ENCODE measurements at regions of chr4 and their contacts with region 1.

Region 1: GRCh38 chr4:69718396-69719253 is 41.8 kb downstream of the SULT1B1 start:
- DNase-seq: no peak
- ATAC-seq: no peak
- H3K4me3 ChIP-seq: no peak overlapping the region
- H3K4me3 Mint-ChIP-seq: no peak overlapping the region
- H3K27ac ChIP-seq: no peak overlapping the region
- H3K27ac Mint-ChIP-seq: no peak overlapping the region
- H3K4me1 ChIP-seq: no peaks in the 10 kb centered on the region
- H3K4me1 Mint-ChIP-seq: peaks cover 6% of the 10 kb centered on the region
- H3K27me3 ChIP-seq: no peaks in the 10 kb centered on the region
- H3K27me3 Mint-ChIP-seq: no peaks in the 10 kb centered on the region
- CTCF ChIP-seq: no peak

Region 2: GRCh38 chr4:68535974-68536373 is 1182.7 kb before region 1 on chr4:
- CTCF ChIA-PET with region 1: no interaction called
- POLR2A ChIA-PET with region 1: no interaction called
- intact Hi-C with region 1: no loop called
- DNase-seq: no peak
- ATAC-seq: no peak
- H3K4me3 ChIP-seq: no peak overlapping the region
- H3K4me3 Mint-ChIP-seq: no peak overlapping the region
- H3K27ac ChIP-seq: no peak overlapping the region
- H3K27ac Mint-ChIP-seq: no peak overlapping the region
- H3K4me1 ChIP-seq: no peaks in the 10 kb centered on the region
- H3K4me1 Mint-ChIP-seq: no peaks in the 10 kb centered on the region
- H3K27me3 ChIP-seq: no peaks in the 10 kb centered on the region
- H3K27me3 Mint-ChIP-seq: peaks cover 4% of the 10 kb centered on the region
- CTCF ChIP-seq: no peak

Region 3: GRCh38 chr4:69707807-69708206 is 10.8 kb before region 1 on chr4:
- CTCF ChIA-PET with region 1: no interaction called
- POLR2A ChIA-PET with region 1: no interaction called
- intact Hi-C with region 1: no loop called
- DNase-seq: no peak
- ATAC-seq: no peak
- H3K4me3 ChIP-seq: no peak overlapping the region
- H3K4me3 Mint-ChIP-seq: no peak overlapping the region
- H3K27ac ChIP-seq: no peak overlapping the region
- H3K27ac Mint-ChIP-seq: no peak overlapping the region
- H3K4me1 ChIP-seq: no peaks in the 10 kb centered on the region
- H3K4me1 Mint-ChIP-seq: peaks cover 2% of the 10 kb centered on the region
- H3K27me3 ChIP-seq: no peaks in the 10 kb centered on the region
- H3K27me3 Mint-ChIP-seq: no peaks in the 10 kb centered on the region
- CTCF ChIP-seq: no peak

Region 4: DNA sequence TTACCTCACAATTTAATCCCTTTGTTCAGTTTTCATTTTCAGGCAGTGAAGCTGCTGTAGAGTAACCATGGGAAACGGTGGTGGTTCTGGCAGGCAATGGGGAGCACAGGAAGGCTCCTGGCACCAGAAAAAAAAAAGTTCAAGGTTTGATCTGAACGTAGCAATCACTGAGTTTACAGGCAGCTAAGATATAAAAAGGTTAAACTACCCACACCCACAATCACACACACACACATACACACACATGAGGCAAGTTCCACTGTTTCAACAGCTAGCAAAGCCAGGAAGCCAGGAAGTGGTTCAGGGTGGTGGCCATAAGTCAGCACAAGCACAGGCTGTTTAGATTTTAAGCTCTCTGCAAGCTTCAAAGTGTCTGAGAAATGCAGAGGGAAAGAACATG is 41.8 kb after region 1 on chr4 and contains the start of gene SULT1B1:
- CTCF ChIA-PET with region 1: no interaction called
- POLR2A ChIA-PET with region 1: no interaction called
- intact Hi-C with region 1: loop called in 1 of 2 experiments (anchors 5 kb)
- DNase-seq: peak in 8 of 9 experiments; percentile 37 to 78 (median 56)
- ATAC-seq: peak; percentile 94
- H3K4me3 ChIP-seq: peak within 1 kb of the TSS; percentile 22 to 43
- H3K4me3 Mint-ChIP-seq: peak within 1 kb of the TSS; percentile 87
- H3K27ac ChIP-seq: peak within 1 kb of the TSS; percentile 34
- H3K27ac Mint-ChIP-seq: peak within 1 kb of the TSS; percentile 91
- H3K4me1 ChIP-seq: peaks cover 47% of the 10 kb centered on the region
- H3K4me1 Mint-ChIP-seq: peaks cover 68% of the 10 kb centered on the region
- H3K27me3 ChIP-seq: no peaks in the 10 kb centered on the region
- H3K27me3 Mint-ChIP-seq: no peaks in the 10 kb centered on the region
- CTCF ChIP-seq: no peak
- total RNA-seq, gene SULT1B1: 4.5 to 5.1 TPM